ENCODE measurements at regions of chr2 and their contacts with region 1.

Region 1: DNA sequence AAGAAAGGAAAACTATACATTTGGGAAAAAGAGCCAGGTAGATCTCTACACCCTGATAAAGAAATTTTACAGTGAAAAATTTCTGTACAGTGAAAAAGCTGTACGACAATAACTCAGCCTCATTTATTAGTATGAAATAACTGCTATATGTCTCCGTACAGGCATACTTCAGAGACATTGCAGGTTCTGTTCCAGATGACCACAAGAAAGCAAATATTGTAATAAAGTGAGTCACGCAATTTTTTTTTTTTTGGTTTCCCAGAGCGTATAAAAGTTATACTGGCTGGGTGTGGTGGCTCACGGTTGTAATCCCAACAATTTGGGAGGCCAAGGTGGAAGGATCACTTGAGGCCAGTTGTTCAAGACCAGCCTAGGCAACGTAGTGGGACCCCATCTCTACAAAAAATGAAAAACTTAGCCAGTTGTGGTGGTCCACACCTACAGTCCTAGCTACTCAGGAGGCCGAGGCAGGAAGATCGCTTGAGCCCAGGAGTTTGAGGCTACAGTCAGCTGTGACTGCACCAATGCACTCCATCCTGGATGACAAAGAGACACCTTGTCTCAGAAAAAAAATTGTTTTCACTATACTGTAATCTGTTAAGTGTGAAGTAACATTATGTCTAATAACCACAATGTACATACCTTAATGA is 28.2 kb upstream of the AMMECR1L start:
- DNase-seq: peak; percentile 98
- ATAC-seq: peak; percentile 96
- H3K4me3 ChIP-seq: no peak overlapping the region
- H3K27ac ChIP-seq: peak overlapping the region; percentile 64
- H3K4me1 ChIP-seq: peaks cover 12% of the 10 kb centered on the region
- H3K27me3 ChIP-seq: no peaks in the 10 kb centered on the region
- CTCF ChIP-seq: no peak

Region 2: DNA sequence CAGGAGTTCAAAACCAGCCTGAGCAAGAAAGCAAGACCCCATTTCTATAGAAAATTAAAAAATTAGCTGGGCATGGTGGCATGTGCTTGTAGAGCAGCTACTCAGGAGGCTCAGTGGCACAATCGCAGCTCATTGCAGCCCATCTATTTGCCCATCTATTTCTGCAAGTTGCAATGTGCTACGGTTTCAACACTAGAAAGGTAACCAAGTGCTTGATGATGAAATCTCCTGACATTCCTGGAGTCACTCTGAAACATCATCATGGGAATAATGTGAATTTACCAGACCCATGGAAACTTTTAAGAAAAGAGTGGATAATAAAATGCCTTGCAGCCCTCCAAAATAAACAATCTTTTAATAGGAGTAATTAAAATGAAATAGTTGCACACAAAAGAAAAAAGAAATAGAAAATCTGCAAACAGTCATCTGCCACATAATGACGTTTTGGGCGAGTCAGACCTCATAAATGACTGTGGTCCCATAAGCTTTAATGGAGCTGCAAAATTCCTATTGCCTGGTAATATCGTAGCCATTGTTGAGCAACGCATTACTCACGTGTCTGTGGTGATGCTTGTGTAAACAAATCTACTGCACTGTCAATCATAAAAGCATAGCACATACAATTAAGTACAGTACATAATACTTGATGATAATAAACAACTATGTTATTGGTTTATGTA is 18.4 kb after region 1 on chr2:
- CTCF ChIA-PET with region 1: interaction called, 5 read pairs
- POLR2A ChIA-PET with region 1: no interaction called
- intact Hi-C with region 1: loop called (anchors 1 kb)
- DNase-seq: peak; percentile 95
- ATAC-seq: peak; percentile 95
- H3K4me3 ChIP-seq: no peak overlapping the region
- H3K27ac ChIP-seq: peak overlapping the region; percentile 62
- H3K4me1 ChIP-seq: peaks cover 9% of the 10 kb centered on the region
- H3K27me3 ChIP-seq: no peaks in the 10 kb centered on the region
- CTCF ChIP-seq: no peak

Measured in PC-3 (cell line).